ENCODE measurements at regions of chr3 and their contacts with region 1.

Region 1: DNA sequence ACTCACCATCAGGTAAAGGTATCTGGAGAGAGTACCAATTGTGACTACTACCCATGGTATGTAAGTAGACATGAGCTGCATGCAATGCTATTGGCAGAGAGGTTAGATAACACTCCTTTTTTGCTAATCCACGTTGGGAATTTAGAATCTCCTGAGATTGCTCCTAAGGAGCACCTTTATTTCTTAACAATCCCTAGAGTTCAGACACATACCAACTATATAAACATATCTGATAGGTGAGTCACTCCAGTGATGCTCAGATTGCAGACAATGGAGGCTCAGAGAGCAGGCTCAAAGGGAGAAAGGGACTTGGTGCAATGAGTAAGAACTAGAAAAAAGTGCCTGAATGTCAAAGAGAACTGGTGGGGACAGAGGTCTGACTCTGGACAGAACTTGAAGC is 47.0 kb upstream of the LRRFIP2 start:
- DNase-seq: peak; percentile 47
- H3K4me3 ChIP-seq: no peak overlapping the region
- CTCF ChIP-seq: no peak

Region 2: GRCh38 chr3:37028329-37028728 is 193.1 kb before region 1 on chr3:
- in situ Hi-C with region 1: loop called (anchors 25 kb)
- DNase-seq: no peak
- H3K4me3 ChIP-seq: no peak overlapping the region
- CTCF ChIP-seq: no peak

Region 3: DNA sequence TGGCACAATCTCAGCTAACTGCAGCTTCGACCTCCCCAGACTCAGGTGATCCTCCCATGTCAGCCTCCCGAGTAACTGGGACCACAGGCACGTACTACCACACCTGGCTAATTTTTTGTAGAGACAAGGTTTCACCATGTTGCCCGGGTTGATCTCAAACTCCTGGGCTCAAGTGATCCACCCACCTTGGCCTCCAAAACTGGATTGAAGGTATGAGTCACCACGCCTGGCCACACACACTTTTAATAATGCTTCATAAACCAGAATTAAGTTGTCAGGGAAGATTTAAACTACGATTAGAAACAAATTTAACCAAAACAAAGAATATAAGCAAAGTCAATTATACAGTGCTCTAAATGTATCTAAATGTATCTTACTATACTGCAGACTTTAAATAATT is 134.5 kb before region 1 on chr3:
- in situ Hi-C with region 1: no loop called
- DNase-seq: no peak
- H3K4me3 ChIP-seq: no peak overlapping the region
- CTCF ChIP-seq: no peak

Region 4: DNA sequence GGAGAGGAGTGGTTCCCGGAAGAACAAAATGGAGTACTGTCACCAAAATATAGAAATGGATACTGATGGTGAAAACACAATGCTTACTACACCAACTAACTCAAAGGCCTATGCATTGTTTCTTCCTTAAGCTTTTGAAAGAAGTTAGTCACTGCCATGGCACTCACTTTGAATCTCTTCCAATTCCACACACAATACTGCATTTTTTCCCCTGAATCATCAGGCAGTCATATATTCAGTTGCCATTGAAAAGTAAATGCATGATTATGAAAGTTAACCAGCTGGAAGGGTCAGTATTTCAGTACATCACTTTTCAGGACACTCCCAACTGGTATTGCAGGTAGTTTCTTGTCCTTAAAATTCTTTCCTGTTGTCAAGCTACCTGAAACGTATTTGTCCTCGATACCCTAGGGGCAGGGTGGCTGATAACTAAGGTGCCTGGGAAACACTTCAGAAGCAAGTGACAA is 38.0 kb before region 1 on chr3:
- in situ Hi-C with region 1: no loop called
- DNase-seq: peak; percentile 94
- H3K4me3 ChIP-seq: no peak overlapping the region
- CTCF ChIP-seq: no peak

Measured in astrocyte of the cerebellum (primary cell).